WTC11 (cell line): ENCODE measurements at regions of chr20 and their contacts with region 1.

Region 1: GRCh38 chr20:33262658-33263065 is 20.4 kb upstream of the BPIFB1 start:
- DNase-seq: peak; percentile 63
- ATAC-seq: peak; percentile 99
- H3K4me3 Mint-ChIP-seq: no peak overlapping the region
- H3K27ac Mint-ChIP-seq: no peak overlapping the region
- H3K4me1 Mint-ChIP-seq: no peaks in the 10 kb centered on the region
- H3K27me3 Mint-ChIP-seq: peaks cover 12% of the 10 kb centered on the region
- CTCF ChIP-seq: no peak

Region 2: GRCh38 chr20:33086052-33086722 is 176.5 kb before region 1 on chr20:
- CTCF ChIA-PET with region 1: no interaction called
- POLR2A ChIA-PET with region 1: no interaction called
- DNase-seq: no peak
- ATAC-seq: no peak
- H3K4me3 Mint-ChIP-seq: no peak overlapping the region
- H3K27ac Mint-ChIP-seq: no peak overlapping the region
- H3K4me1 Mint-ChIP-seq: no peaks in the 10 kb centered on the region
- H3K27me3 Mint-ChIP-seq: no peaks in the 10 kb centered on the region
- CTCF ChIP-seq: no peak

Region 3: DNA sequence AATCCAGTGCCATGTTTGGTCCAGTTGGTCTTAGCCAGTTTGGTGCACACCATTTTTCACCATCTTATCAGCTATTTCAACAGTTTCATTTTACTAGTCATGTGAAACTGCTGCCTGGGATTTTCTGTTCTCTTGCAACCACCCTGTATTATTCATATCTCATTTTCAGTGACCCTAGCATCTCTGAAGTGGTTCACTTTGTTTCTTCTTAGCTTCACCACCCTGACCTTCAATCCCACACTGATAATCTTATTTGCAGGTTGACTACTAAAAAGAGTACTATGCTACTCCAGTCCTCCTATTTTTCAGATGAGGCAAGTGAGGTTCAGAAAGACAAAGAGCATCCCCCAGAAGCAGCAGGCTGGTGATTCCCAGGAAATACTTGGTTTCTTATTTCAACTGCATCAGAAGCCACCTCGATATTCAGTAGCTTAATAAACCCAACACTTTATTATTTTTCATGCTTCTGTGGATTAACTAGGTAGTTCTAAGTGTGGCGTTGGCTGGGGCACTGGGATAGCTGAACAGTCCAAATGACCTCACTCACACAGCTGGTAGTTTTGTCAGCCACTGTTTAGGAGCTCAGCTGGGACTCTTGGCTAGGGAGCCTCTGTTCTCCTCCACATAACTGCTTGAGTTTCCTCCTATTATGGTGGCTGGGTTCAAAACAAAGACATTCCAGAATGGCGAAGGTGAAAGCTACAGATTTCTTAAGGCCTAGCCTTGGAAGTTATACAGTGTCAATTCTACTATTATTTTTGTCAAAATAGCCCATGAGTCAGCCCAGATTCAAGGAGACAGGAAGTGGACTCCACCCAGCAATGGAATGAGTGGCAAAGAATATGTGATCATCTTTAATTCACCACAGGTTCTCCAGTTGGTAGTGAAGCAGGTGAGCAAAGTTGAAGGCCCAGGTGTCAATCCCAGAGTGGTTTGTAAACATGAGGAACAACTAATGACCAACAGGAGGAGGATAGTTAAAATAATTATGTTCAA is 142.6 kb before region 1 on chr20:
- CTCF ChIA-PET with region 1: no interaction called
- POLR2A ChIA-PET with region 1: no interaction called
- DNase-seq: no peak
- ATAC-seq: no peak
- H3K4me3 Mint-ChIP-seq: no peak overlapping the region
- H3K27ac Mint-ChIP-seq: no peak overlapping the region
- H3K4me1 Mint-ChIP-seq: no peaks in the 10 kb centered on the region
- H3K27me3 Mint-ChIP-seq: peaks cover 12% of the 10 kb centered on the region
- CTCF ChIP-seq: no peak

Region 4: DNA sequence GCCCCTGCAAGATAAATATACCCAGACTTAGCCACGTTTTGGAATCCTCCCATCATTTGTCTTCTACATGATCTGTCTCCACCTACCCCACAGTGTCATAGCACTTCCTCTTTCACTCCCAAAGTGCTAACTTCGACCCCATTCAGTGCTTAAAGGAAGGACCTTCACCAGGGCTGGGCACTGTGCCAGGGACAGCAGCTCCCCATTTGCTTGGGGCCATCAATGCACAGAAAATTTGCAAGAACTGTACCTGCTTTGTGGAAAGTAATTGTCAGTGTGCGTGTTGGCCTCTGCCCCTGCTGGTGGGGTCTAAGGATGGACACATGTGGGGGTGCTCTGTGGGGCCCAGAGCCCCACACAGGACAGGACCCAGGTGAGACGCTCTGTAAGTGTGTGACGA is 99.9 kb before region 1 on chr20:
- CTCF ChIA-PET with region 1: no interaction called
- POLR2A ChIA-PET with region 1: no interaction called
- DNase-seq: no peak
- ATAC-seq: no peak
- H3K4me3 Mint-ChIP-seq: no peak overlapping the region
- H3K27ac Mint-ChIP-seq: no peak overlapping the region
- H3K4me1 Mint-ChIP-seq: no peaks in the 10 kb centered on the region
- H3K27me3 Mint-ChIP-seq: peaks cover 2% of the 10 kb centered on the region; the same call in 1 of the 2 replicates
- CTCF ChIP-seq: no peak

Region 5: DNA sequence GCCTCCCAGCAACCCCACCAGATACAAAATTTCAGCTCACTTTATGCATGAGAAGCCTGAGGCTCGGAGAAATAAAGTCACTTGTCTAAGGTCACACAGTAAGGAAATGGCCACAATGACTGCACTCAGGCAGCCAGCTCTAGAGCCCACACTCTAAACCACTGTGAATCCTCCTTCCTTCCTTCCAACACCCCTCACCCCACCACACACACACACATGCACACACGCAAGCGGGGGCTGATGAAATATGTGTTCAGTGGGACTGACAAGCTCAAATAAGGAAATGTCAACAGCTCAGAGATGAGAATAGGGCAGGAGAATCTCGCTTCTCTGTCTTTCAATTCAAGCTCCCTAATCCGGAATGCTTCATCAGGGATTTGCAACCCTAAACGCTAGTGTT is 32.8 kb before region 1 on chr20:
- CTCF ChIA-PET with region 1: interaction called, 11 read pairs
- POLR2A ChIA-PET with region 1: no interaction called
- DNase-seq: no peak
- ATAC-seq: no peak
- H3K4me3 Mint-ChIP-seq: no peak overlapping the region
- H3K27ac Mint-ChIP-seq: no peak overlapping the region
- H3K4me1 Mint-ChIP-seq: peaks cover 3% of the 10 kb centered on the region; the same call in 1 of the 2 replicates
- H3K27me3 Mint-ChIP-seq: peaks cover 6% of the 10 kb centered on the region
- CTCF ChIP-seq: no peak

Region 6: GRCh38 chr20:33250666-33251065 is 12.0 kb before region 1 on chr20:
- CTCF ChIA-PET with region 1: interaction called, 12 read pairs
- POLR2A ChIA-PET with region 1: no interaction called
- DNase-seq: no peak
- ATAC-seq: no peak
- H3K4me3 Mint-ChIP-seq: no peak overlapping the region
- H3K27ac Mint-ChIP-seq: no peak overlapping the region
- H3K4me1 Mint-ChIP-seq: no peaks in the 10 kb centered on the region
- H3K27me3 Mint-ChIP-seq: no peaks in the 10 kb centered on the region
- CTCF ChIP-seq: no peak

Region 7: DNA sequence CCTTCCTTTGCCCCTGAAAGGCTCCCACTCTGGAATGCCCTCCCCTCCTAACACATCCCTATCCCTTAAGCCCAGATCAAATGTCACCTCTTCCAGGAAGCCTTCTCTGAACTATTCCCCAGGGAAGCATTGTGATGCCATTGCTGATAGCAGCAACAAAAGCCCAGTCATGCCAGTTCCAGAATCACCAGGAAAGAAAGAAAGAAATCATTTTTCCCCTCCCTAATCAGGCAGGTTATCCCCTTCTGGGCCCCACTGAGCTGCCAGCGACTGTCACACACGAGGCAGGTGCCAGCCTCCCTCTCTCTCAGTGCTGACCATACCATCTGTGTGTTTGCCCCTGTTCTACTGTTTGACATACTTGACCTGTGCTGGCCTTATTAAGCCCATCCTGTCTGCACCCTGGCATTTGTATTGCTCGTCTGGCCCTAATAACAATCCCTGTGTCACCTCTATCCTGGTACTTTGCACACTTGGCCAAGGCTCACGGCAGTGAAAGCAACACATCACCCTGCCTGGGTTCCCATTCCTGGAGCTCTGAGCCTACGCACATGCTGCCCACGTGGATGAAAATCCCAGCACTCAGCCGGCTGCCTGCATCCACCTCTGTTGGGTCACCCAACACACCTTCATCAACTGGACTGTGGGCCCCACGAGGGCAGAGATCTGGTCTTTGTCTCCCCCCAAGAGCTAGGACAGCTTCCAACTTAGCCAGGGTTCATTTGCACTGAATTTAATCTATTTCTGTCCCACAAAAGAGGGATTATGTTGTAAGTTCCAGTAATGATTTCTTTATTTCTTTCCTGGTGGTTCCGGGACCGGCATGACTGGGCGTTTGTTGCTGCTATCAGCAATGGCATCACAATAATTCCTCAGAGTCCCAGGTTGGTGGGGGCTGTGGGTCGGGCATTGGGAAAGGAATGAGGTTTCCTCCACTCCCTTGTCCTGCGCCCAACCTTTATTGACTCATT is 15.1 kb after region 1 on chr20:
- CTCF ChIA-PET with region 1: interaction called, 10 read pairs
- POLR2A ChIA-PET with region 1: no interaction called
- DNase-seq: no peak
- ATAC-seq: peak; percentile 63
- H3K4me3 Mint-ChIP-seq: no peak overlapping the region
- H3K27ac Mint-ChIP-seq: no peak overlapping the region; the same call in 1 of the 2 replicates
- H3K4me1 Mint-ChIP-seq: peaks cover 17% of the 10 kb centered on the region
- H3K27me3 Mint-ChIP-seq: no peaks in the 10 kb centered on the region
- CTCF ChIP-seq: no peak

Region 8: GRCh38 chr20:33291830-33292355 is 29.2 kb after region 1 on chr20:
- CTCF ChIA-PET with region 1: interaction called, 60 read pairs
- POLR2A ChIA-PET with region 1: no interaction called
- DNase-seq: peak; percentile 91
- ATAC-seq: peak; percentile 86
- H3K4me3 Mint-ChIP-seq: no peak overlapping the region
- H3K27ac Mint-ChIP-seq: no peak overlapping the region
- H3K4me1 Mint-ChIP-seq: no peaks in the 10 kb centered on the region
- H3K27me3 Mint-ChIP-seq: no peaks in the 10 kb centered on the region; the same call in 1 of the 2 replicates
- CTCF ChIP-seq: peak; percentile 100

Region 9: GRCh38 chr20:33299111-33299603 is 36.5 kb after region 1 on chr20:
- CTCF ChIA-PET with region 1: interaction called, 60 read pairs
- POLR2A ChIA-PET with region 1: no interaction called
- DNase-seq: peak; percentile 93
- ATAC-seq: peak; percentile 97
- H3K4me3 Mint-ChIP-seq: peak overlapping the region; percentile 45; the same call in 1 of the 2 replicates
- H3K27ac Mint-ChIP-seq: no peak overlapping the region
- H3K4me1 Mint-ChIP-seq: peaks cover 7% of the 10 kb centered on the region; the same call in 1 of the 2 replicates
- H3K27me3 Mint-ChIP-seq: 0 out of 2 replicates have a peak, but pooled peaks cover 3% of the 10 kb centered on the region
- CTCF ChIP-seq: peak; percentile 93

Region 10: GRCh38 chr20:33318096-33318429 is 55.4 kb after region 1 on chr20:
- CTCF ChIA-PET with region 1: no interaction called
- POLR2A ChIA-PET with region 1: no interaction called
- DNase-seq: peak; percentile 28
- ATAC-seq: peak; percentile 75
- H3K4me3 Mint-ChIP-seq: no peak overlapping the region
- H3K27ac Mint-ChIP-seq: no peak overlapping the region
- H3K4me1 Mint-ChIP-seq: no peaks in the 10 kb centered on the region
- H3K27me3 Mint-ChIP-seq: no peaks in the 10 kb centered on the region; the same call in 1 of the 2 replicates
- CTCF ChIP-seq: no peak